Endothelial cell of umbilical vein (primary cell): ENCODE measurements at regions of chr15 and their contacts with region 1.

Region 1: DNA sequence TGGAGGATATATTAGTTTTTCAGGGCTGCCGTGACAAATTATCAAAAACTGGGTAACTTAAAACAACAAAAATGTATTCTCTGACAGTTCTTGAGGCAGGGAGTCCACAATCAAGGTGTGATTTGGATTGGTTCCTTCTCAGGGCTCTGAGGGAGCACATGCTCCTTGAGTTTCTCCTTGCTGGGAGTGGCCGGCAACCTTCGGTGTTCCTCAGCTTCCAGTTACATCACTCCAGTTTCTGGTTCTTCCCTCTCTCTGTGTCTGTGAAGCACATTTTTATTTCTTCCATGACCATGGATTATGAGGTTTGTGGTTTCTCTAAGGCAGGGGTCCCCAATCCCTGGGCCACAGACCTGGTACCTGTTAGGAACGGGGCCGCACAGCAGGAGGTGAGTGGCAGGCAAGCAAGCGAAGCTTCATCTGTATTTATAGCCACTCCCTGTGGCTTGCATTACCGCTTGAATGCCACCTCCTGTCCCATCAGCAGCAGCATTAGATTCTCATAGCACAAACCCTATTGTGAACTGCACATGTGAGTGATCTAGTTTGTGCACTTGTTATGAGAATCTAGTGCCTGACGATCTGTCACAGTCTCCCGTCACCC is 24.3 kb downstream of the LRRC28 start:
- DNase-seq: no peak
- H3K4me3 ChIP-seq: no peak overlapping the region
- H3K27ac ChIP-seq: no peak overlapping the region
- H3K4me1 ChIP-seq: no peaks in the 10 kb centered on the region
- H3K27me3 ChIP-seq: no peaks in the 10 kb centered on the region
- CTCF ChIP-seq: no peak
- POLR2A ChIP-seq: no peak

Region 2: DNA sequence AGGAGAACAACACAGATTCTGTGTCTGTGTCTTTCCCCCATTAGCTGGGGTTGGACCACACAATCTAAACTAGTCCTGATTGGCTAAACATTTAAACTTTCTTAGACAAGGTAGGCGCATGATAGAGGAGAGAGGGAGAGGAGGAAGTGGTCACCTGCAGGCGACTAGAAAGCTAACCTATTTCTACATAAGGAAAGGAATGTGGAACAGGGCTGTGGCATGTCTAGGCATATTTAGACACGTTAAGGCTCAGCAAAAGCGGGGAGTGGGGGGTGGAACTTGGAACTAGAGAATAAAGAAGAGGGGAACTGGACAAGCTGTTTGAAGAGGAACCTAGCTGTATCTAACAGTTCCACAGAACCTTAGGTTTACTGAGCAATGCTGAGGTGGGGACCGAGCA is 11.5 kb before region 1 on chr15:
- CTCF ChIA-PET with region 1: interaction called, 18 read pairs
- POLR2A ChIA-PET with region 1: no interaction called
- dilution Hi-C with region 1: no loop called
- intact Hi-C with region 1: no loop called
- DNase-seq: no peak
- H3K4me3 ChIP-seq: no peak overlapping the region
- H3K27ac ChIP-seq: no peak overlapping the region
- H3K4me1 ChIP-seq: no peaks in the 10 kb centered on the region
- H3K27me3 ChIP-seq: no peaks in the 10 kb centered on the region
- CTCF ChIP-seq: no peak
- POLR2A ChIP-seq: no peak

Region 3: DNA sequence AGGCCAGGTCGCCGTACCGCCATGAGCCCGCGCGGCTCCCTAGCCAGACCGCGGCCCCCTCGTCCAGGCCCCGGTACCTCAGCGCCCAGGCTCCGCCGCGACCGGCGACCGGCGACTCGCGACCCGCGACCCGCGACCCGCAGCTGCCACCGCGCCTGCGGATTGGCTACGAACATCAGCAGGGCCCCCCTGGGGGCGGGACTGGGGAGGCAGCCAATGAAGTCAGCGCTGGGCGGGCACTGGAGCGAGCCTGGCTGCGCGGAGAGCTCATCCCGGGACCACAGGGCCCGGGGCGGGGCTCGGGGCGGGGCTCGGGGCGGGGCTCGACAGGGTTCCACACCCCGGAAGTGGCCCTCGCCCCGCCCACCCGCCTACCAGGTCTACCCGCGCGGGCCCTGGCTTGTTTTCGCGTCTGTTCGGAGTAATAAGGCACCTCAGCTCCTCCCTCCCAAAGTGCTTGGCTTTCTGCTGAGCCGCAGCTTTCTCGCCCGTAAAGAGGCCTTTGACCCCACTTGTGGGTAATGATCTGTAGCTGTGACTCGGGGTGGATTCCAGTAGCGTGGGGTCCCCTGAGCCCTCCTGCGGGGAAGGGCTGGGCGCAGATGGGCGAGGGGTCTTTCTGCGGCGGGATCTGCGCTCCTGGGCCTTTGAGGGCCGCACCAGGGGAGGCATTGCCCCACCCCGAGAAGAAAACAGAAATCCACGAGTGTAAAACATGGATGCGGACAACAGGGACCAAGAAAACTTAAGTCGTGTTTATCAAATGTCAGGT is 457.8 kb after region 1 on chr15 and contains the start of gene LYSMD4:
- CTCF ChIA-PET with region 1: interaction called, 64 read pairs
- POLR2A ChIA-PET with region 1: no interaction called
- dilution Hi-C with region 1: no loop called
- intact Hi-C with region 1: loop called (anchors 1 kb)
- DNase-seq: peak; percentile 93
- H3K4me3 ChIP-seq: peak within 1 kb of the TSS; percentile 63 to 79 (median 71)
- H3K27ac ChIP-seq: peak within 1 kb of the TSS; percentile 21
- H3K4me1 ChIP-seq: peaks cover 5% of the 10 kb centered on the region
- H3K27me3 ChIP-seq: no peaks in the 10 kb centered on the region
- CTCF ChIP-seq: no peak
- POLR2A ChIP-seq: no peak
- total RNA-seq, gene LYSMD4: 7.0 and 8.4 TPM in 2 replicates

Region 4: DNA sequence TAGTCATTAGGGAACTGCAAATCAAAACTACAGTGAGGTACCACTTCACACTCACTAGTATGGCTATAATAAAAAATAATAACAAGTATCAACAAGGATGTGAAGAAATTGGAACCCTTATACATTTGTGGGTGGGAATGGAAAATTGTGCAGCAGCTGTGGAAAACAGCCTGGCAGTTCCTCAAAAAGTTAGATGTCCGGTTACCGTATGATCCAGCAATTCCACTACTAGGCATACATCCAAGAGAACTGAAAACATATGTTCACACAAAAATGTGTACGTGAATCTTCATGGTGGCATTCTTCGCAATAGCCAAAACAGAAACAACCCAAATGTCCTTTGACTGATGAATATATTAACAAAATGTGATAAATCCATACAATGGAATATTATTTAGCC is 645.5 kb after region 1 on chr15:
- CTCF ChIA-PET with region 1: interaction called, 12 read pairs
- POLR2A ChIA-PET with region 1: no interaction called
- dilution Hi-C with region 1: no loop called
- intact Hi-C with region 1: loop called (anchors 5 kb)
- DNase-seq: no peak
- H3K4me3 ChIP-seq: no peak overlapping the region
- H3K27ac ChIP-seq: no peak overlapping the region
- H3K4me1 ChIP-seq: no peaks in the 10 kb centered on the region
- H3K27me3 ChIP-seq: peaks cover 2 to 16% of the 10 kb centered on the region in 2 experiments
- CTCF ChIP-seq: no peak
- POLR2A ChIP-seq: no peak